ENCODE measurements at regions of chr21 and their contacts with region 1.

Region 1: DNA sequence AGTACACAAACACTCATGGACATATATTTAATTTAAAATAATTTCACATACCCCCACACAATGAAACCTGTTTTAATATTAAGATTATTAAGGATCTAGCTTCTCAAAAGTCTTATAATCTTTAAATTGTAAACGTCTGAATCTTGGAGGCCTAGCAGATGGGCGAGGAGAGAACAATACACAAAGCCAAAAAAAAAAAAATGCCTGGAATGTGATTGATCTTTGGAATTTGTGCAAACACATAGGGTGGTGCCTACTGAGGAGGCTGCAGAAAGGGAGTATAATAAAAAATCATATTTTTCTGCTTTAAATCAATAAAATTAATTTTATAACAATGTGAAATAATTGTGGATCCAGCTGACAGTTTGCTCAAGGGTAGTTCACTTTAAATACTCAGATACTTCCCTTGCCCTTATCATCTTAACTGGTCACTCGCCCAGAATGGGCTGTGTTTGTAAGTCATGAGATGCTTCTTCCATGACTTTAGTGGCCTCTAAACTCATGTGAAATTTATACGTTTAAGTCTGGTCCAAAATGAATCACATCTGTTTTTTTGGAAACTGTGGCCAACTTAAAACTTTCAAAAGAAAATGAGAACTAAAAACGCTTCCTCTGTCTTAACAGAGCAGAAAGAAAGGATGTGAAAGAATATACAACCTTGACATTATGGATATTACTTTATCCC is 802.8 kb upstream of the CXADR start:
- DNase-seq: no peak
- H3K4me3 Mint-ChIP-seq: no peak overlapping the region
- H3K27ac Mint-ChIP-seq: no peak overlapping the region
- H3K4me1 Mint-ChIP-seq: no peaks in the 10 kb centered on the region
- H3K27me3 Mint-ChIP-seq: no peaks in the 10 kb centered on the region
- CTCF ChIP-seq: no peak

Region 2: GRCh38 chr21:16454399-16454798 is 255.6 kb before region 1 on chr21:
- CTCF ChIA-PET with region 1: no interaction called
- intact Hi-C with region 1: no loop called
- DNase-seq: no peak
- H3K4me3 Mint-ChIP-seq: no peak overlapping the region
- H3K27ac Mint-ChIP-seq: no peak overlapping the region
- H3K4me1 Mint-ChIP-seq: no peaks in the 10 kb centered on the region
- H3K27me3 Mint-ChIP-seq: no peaks in the 10 kb centered on the region
- CTCF ChIP-seq: no peak

Region 3: GRCh38 chr21:16492892-16493291 is 217.1 kb before region 1 on chr21:
- CTCF ChIA-PET with region 1: no interaction called
- intact Hi-C with region 1: no loop called
- DNase-seq: no peak
- H3K4me3 Mint-ChIP-seq: no peak overlapping the region
- H3K27ac Mint-ChIP-seq: no peak overlapping the region
- H3K4me1 Mint-ChIP-seq: no peaks in the 10 kb centered on the region
- H3K27me3 Mint-ChIP-seq: no peaks in the 10 kb centered on the region
- CTCF ChIP-seq: no peak

Region 4: GRCh38 chr21:16569679-16570078 is 140.3 kb before region 1 on chr21:
- CTCF ChIA-PET with region 1: no interaction called
- intact Hi-C with region 1: loop called (anchors 5 kb)
- DNase-seq: no peak
- H3K4me3 Mint-ChIP-seq: no peak overlapping the region
- H3K27ac Mint-ChIP-seq: no peak overlapping the region
- H3K4me1 Mint-ChIP-seq: peaks cover 17% of the 10 kb centered on the region
- H3K27me3 Mint-ChIP-seq: no peaks in the 10 kb centered on the region
- CTCF ChIP-seq: no peak